ENCODE measurements at regions of chrX and their contacts with region 1.

Region 1: GRCh38 chrX:65985922-65986588 is 53.8 kb downstream of the VSIG4 start:
- DNase-seq: no peak
- H3K4me3 ChIP-seq: no peak overlapping the region
- H3K27me3 ChIP-seq: no peaks in the 10 kb centered on the region
- CTCF ChIP-seq: peak; percentile 47

Region 2: GRCh38 chrX:65581661-65582339 is 404.3 kb before region 1 on chrX:
- CTCF ChIA-PET with region 1: interaction called, 25 read pairs
- POLR2A ChIA-PET with region 1: no interaction called
- DNase-seq: no peak
- H3K4me3 ChIP-seq: no peak overlapping the region
- H3K27me3 ChIP-seq: no peaks in the 10 kb centered on the region
- CTCF ChIP-seq: peak; percentile 60

Region 3: DNA sequence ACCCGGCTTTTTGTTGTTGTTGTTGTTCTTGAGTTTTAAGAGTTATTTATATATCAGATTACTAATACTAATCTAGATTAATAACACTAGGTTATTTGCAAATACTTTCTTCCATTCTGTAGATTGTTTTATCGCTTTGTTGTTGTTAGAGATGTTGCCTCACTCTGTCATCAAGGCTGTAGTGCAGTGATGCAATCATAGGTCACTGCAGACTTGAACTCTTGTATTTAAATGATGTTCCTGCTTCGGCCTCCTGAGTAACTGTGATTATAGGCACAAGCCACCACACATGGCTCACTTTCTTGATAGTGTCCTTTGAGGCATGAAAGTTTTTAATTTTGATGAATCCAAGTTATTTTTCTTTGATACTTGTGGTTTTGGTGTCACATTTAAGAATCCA is 75.2 kb before region 1 on chrX:
- CTCF ChIA-PET with region 1: no interaction called
- POLR2A ChIA-PET with region 1: no interaction called
- DNase-seq: no peak
- H3K4me3 ChIP-seq: no peak overlapping the region
- H3K27me3 ChIP-seq: no peaks in the 10 kb centered on the region
- CTCF ChIP-seq: no peak